ENCODE measurements at regions of chr3 and their contacts with region 1.

Region 1: DNA sequence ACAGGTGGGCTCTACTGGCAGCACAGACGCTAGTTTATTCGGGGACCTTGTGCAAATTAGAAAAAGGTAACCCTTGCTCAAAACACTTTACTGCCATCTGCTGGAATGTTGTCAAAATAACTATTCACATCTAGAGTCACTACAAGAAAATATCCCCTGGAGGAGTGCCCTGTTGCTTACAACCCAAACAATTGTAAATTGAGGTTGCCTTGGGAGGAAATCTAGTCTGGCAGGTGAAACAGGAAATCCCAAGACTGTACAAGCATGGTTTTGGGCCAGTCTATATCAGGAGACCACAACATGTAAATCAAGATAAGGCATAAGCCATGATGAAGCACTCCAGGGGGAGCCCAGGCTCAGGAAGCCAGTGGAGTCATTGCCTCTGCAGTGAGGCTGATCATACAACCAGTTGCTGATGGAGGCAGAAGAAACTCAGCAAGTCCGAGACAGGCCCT is 136.8 kb upstream of the ACP3 start:
- H3K4me3 Mint-ChIP-seq: no peak overlapping the region
- H3K27ac Mint-ChIP-seq: no peak overlapping the region
- H3K4me1 Mint-ChIP-seq: peaks cover 4% of the 10 kb centered on the region
- H3K27me3 Mint-ChIP-seq: peaks cover 2% of the 10 kb centered on the region

Region 2: DNA sequence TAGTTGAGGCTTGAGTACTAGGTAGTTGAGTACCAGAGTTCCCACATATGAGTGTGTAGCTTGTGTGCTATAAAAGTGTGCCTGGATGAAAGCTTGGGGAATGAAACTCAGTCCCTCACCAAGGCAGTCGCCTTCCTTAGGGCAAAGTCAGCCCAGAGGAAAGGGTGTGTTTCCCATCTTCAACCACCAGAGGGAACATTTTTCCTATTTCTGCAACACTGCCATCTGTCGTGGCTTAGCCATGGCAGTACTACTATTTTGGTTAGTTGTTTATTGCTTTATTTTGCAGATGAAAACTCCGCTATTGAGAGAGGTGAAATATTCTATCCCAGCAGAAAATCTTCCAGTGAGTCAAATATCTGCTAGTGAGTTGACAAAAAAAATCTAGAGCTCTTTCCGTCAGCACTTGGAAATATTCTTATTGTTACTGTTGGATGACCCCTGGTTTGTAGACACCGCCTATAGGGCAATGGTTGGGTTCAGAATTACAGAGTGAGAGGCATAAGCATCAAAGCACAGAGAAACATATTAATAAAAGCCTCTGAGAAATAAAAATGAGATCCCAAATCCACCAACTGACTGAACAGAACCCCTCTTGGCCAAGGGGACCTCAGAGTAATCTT is 385.5 kb before region 1 on chr3:
- intact Hi-C with region 1: loop called (anchors 10 kb)
- H3K4me3 Mint-ChIP-seq: no peak overlapping the region
- H3K27ac Mint-ChIP-seq: no peak overlapping the region
- H3K4me1 Mint-ChIP-seq: peaks cover 14% of the 10 kb centered on the region
- H3K27me3 Mint-ChIP-seq: no peaks in the 10 kb centered on the region

Region 3: GRCh38 chr3:132034486-132035464 is 145.6 kb before region 1 on chr3 and contains the start of gene CPNE4:
- intact Hi-C with region 1: loop called (anchors 1 kb)
- H3K4me3 Mint-ChIP-seq: peak within 1 kb of the TSS; percentile 5
- H3K27ac Mint-ChIP-seq: no peak within 1 kb of the TSS
- H3K4me1 Mint-ChIP-seq: peaks cover 18% of the 10 kb centered on the region
- H3K27me3 Mint-ChIP-seq: peaks cover 51% of the 10 kb centered on the region

Region 4: DNA sequence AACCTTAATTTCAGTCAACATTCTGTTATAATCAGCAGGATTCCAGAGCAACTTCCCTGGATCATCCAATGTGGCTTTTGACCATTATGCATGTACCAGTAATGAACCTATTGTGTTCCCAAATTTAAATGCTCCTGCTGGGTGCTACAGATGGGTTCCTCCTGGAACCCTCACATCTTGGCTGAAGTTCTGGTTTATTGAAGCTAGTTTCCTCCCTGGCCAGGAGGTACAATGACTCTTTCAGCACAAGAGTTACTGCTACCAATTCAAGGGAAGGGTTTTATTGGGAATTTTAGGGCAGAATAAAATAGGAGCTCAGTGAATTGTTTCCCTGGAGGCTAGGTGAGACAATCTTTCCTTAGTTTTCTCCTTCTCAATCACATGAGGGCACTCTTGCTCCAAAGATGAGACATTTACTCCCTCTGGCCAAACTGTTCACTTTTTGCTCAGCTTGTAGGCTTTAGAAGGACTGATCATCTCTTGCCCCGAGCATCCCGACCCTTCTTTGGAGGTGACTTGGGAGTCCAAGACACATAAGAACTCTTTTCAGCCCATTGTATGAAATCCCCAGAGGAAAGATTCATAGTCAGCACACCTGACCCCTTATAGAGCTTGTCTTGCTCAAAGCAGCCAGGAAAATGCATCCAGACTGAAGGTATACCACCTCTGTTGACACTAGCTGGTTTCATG is 550.7 kb after region 1 on chr3:
- intact Hi-C with region 1: no loop called
- H3K4me3 Mint-ChIP-seq: no peak overlapping the region
- H3K27ac Mint-ChIP-seq: no peak overlapping the region
- H3K4me1 Mint-ChIP-seq: no peaks in the 10 kb centered on the region
- H3K27me3 Mint-ChIP-seq: peaks cover 14% of the 10 kb centered on the region